ENCODE measurements at regions of chr21 and their contacts with region 1.

Region 1: GRCh38 chr21:33931799-33932390 is 16.3 kb upstream of the ATP5PO start:
- DNase-seq: no peak
- ATAC-seq: peak in 3 of 4 donors; percentile 42 to 67 (median 46)
- H3K4me3 ChIP-seq: peak overlapping the region; percentile 63
- H3K27ac ChIP-seq: no peak overlapping the region
- H3K4me1 ChIP-seq: peaks cover 5% of the 10 kb centered on the region
- H3K27me3 ChIP-seq: no peaks in the 10 kb centered on the region
- CTCF ChIP-seq: no peak

Region 2: GRCh38 chr21:34313116-34313515 is 381.2 kb after region 1 on chr21:
- intact Hi-C with region 1: loop called in 1 of 2 experiments (anchors 10 kb)
- DNase-seq: no peak
- ATAC-seq: no peak
- H3K4me3 ChIP-seq: no peak overlapping the region
- H3K27ac ChIP-seq: no peak overlapping the region
- H3K4me1 ChIP-seq: no peaks in the 10 kb centered on the region
- H3K27me3 ChIP-seq: no peaks in the 10 kb centered on the region
- CTCF ChIP-seq: no peak

Region 3: DNA sequence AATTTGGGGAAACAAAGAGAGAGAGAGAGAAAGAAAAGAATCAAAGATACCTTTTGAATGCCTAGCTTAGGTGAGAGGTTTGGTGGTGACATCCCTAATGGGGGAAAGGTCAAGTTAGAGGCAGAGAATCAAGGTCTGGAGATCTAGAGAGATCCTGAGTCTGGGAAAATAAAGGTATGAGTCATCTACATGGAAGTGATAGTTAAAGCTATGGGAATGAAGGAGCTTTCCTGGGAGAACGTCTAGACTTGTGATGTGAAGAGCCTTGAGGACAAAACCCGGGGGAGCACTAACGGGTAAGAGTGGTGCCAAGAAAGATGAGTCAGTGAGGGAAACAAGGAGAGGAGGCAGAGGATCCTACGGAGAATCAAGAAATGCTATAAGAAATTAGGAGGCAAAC is 1228.0 kb after region 1 on chr21:
- intact Hi-C with region 1: no loop called
- DNase-seq: no peak
- ATAC-seq: no peak
- H3K4me3 ChIP-seq: no peak overlapping the region
- H3K27ac ChIP-seq: no peak overlapping the region
- H3K4me1 ChIP-seq: no peaks in the 10 kb centered on the region
- H3K27me3 ChIP-seq: no peaks in the 10 kb centered on the region
- CTCF ChIP-seq: no peak